Endothelial cell of umbilical vein (primary cell): ENCODE measurements at regions of chrX and their contacts with region 1.

Region 1: GRCh38 chrX:108020631-108021030 is 24.2 kb upstream of the VSIG1 start:
- DNase-seq: peak; percentile 55
- H3K4me3 ChIP-seq: no peak overlapping the region
- H3K27ac ChIP-seq: no peak overlapping the region
- H3K4me1 ChIP-seq: peaks cover 19% of the 10 kb centered on the region
- H3K27me3 ChIP-seq: no peaks in the 10 kb centered on the region
- CTCF ChIP-seq: peak; percentile 26 to 44
- POLR2A ChIP-seq: no peak

Region 2: GRCh38 chrX:107537815-107538214 is 482.8 kb before region 1 on chrX:
- CTCF ChIA-PET with region 1: no interaction called
- POLR2A ChIA-PET with region 1: no interaction called
- dilution Hi-C with region 1: no loop called
- intact Hi-C with region 1: no loop called
- DNase-seq: peak; percentile 29
- H3K4me3 ChIP-seq: no peak overlapping the region
- H3K27ac ChIP-seq: no peak overlapping the region
- H3K4me1 ChIP-seq: no peaks in the 10 kb centered on the region
- H3K27me3 ChIP-seq: no peaks in the 10 kb centered on the region
- CTCF ChIP-seq: peak; percentile 22 to 42
- POLR2A ChIP-seq: no peak

Region 3: GRCh38 chrX:108036298-108036973 is 15.8 kb after region 1 on chrX:
- CTCF ChIA-PET with region 1: interaction called, 5 read pairs
- POLR2A ChIA-PET with region 1: no interaction called
- dilution Hi-C with region 1: no loop called
- intact Hi-C with region 1: loop called (anchors 1 kb)
- DNase-seq: peak; percentile 88
- H3K4me3 ChIP-seq: no peak overlapping the region
- H3K27ac ChIP-seq: peak overlapping the region; percentile 94
- H3K4me1 ChIP-seq: peaks cover 14% of the 10 kb centered on the region
- H3K27me3 ChIP-seq: no peaks in the 10 kb centered on the region
- CTCF ChIP-seq: no peak
- POLR2A ChIP-seq: no peak

Region 4: DNA sequence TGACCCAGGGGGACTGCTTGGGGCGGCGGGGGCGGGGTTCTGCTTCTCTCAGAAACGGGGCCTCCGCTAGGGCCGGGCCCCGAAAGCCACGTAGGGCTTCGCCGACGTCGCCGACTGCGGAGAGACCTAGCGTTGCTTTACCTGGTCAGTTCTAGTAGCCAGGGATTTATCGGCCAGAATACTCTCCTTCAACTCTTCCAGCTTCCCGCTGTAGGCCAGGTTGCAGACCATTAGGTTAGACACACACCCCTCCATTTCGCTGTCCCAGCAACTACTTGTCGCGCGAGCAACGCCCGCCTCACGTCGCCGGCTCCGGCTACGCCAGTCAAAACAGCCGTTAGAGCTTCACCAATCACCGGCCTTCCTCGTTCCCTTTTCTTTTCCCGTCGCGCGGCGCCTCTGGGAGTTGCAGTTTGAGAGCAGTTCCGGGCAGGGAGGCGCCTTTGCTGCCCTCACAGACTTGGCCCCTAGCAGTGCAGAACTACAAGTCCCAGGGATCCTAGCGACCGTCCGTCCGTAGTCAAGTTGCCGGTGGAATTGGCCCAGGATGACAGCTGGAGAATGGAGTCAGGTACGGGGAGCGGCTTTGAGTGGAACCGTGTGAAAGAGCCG is 70.7 kb after region 1 on chrX and contains the starts of genes ATG4A and PSMD10:
- CTCF ChIA-PET with region 1: no interaction called
- POLR2A ChIA-PET with region 1: no interaction called
- dilution Hi-C with region 1: no loop called
- intact Hi-C with region 1: loop called (anchors 1 kb)
- DNase-seq: peak; percentile 97
- H3K4me3 ChIP-seq: peak within 1 kb of the TSS; percentile 82 to 98 (median 82)
- H3K27ac ChIP-seq: peak within 1 kb of the TSS; percentile 98
- H3K4me1 ChIP-seq: peaks cover 15% of the 10 kb centered on the region
- H3K27me3 ChIP-seq: no peaks in the 10 kb centered on the region
- CTCF ChIP-seq: no peak
- POLR2A ChIP-seq: peak; percentile 63
- total RNA-seq, gene ATG4A: 27.7 and 28.7 TPM in 2 replicates
- total RNA-seq, gene PSMD10: 71.9 and 82.7 TPM in 2 replicates

Region 5: DNA sequence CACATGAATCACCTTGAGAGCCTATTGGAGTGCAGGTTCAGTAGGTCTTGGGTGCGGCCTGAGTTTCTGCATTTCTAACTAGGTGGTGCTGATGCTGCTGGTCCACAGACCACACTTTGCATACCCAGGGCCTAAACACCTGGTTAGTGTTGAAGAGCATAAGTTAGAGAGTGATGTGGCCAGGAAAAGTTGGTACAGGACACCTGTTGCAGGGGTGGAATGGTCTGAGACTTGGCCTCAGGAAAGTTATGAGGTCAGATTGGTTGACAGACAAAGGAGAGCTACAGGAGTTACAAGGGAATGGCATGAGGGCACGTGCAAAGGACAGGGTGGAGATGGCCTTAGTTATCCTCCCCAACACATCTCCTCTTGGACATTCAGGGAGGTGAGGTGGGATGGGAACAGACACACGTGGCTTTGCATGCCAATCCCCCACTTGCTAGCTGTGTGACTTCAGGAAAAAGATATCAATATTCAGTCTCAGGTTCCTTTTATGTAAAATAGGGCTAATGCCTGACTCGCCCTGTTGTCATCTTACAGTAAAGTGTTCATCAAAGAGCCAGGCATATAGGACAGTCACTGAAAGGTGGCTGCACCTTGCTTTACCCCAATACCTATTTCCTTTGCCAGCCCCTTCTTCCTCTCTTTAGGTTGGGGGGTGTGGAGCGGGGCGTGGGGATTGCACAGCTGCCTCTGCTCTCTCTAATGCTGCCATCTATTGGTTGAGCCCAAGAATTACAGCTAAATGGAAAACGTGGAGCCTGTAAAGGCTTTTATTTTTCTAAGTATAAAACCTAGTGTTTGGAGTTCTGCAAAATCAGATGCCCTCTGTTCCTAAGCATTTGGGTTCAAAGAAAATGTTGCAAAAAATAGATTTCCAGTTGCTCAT is 118.4 kb after region 1 on chrX:
- CTCF ChIA-PET with region 1: interaction called, 42 read pairs
- POLR2A ChIA-PET with region 1: no interaction called
- dilution Hi-C with region 1: no loop called
- intact Hi-C with region 1: loop called (anchors 1 kb)
- DNase-seq: no peak
- H3K4me3 ChIP-seq: no peak overlapping the region
- H3K27ac ChIP-seq: no peak overlapping the region
- H3K4me1 ChIP-seq: no peaks in the 10 kb centered on the region
- H3K27me3 ChIP-seq: no peaks in the 10 kb centered on the region
- CTCF ChIP-seq: peak; percentile 47 to 48
- POLR2A ChIP-seq: no peak

Region 6: DNA sequence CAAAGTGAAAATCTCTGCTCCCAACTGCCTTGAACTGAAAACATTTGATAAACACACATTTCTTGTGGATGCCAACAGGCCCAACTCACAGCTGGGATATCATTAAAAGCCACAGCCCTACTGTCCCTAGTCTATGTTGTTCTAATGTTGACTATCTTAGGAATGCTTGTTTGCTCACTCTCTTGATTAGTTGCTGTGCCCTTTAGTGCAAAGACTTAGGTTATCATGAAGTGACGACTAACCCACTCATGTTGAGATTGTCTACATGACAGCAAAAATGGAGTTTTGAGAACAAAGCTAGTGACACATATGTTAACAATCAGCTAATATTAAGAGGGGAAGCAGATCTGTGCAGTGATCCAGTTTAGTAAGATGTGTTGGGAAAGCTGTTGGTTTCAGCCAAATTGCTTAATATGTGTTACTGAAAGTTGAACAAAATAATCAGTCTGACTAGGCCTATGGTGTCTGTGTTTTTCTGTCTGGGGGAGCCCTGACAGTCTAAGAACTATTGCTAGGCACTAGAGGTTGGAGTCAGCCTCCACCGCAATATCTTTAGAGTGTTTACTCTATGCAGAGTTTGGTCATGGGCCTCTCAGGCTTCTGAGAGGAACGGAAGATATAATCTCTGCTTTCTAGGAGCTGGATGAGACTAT is 196.4 kb after region 1 on chrX:
- CTCF ChIA-PET with region 1: no interaction called
- POLR2A ChIA-PET with region 1: no interaction called
- dilution Hi-C with region 1: no loop called
- intact Hi-C with region 1: no loop called
- DNase-seq: no peak
- H3K4me3 ChIP-seq: no peak overlapping the region
- H3K27ac ChIP-seq: no peak overlapping the region
- H3K4me1 ChIP-seq: no peaks in the 10 kb centered on the region
- H3K27me3 ChIP-seq: no peaks in the 10 kb centered on the region
- CTCF ChIP-seq: no peak
- POLR2A ChIP-seq: no peak